ENCODE measurements at regions of chr4 and their contacts with region 1.

Region 1: DNA sequence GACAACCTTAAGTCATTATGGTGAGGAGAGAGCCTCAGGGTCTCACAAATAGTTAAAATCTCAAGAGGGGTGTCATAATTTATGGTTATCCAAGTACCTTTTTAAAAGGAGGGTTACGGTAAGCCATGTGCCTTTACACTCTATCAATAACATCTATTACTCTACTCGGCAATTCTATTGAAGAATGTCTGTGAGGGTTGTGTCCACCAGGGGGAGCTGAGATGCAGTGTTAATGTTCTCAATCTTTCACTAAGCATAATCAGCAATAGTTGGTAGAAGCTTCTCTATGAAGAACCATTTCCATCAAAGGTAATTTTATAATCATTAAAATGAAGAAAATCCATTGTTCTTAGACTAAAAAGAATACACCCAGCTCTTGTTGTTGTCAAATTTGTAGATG is 457.4 kb downstream of the CENPC start:
- DNase-seq: peak; percentile 74
- ATAC-seq: no peak
- H3K4me3 Mint-ChIP-seq: no peak overlapping the region
- H3K27ac Mint-ChIP-seq: no peak overlapping the region
- H3K4me1 Mint-ChIP-seq: no peaks in the 10 kb centered on the region
- H3K27me3 Mint-ChIP-seq: peaks cover 2% of the 10 kb centered on the region
- CTCF ChIP-seq: peak; percentile 69

Region 2: GRCh38 chr4:66704243-66704642 is 383.7 kb before region 1 on chr4:
- CTCF ChIA-PET with region 1: no interaction called
- POLR2A ChIA-PET with region 1: no interaction called
- intact Hi-C with region 1: no loop called
- DNase-seq: no peak
- ATAC-seq: no peak
- H3K4me3 Mint-ChIP-seq: no peak overlapping the region
- H3K27ac Mint-ChIP-seq: no peak overlapping the region
- H3K4me1 Mint-ChIP-seq: no peaks in the 10 kb centered on the region
- H3K27me3 Mint-ChIP-seq: no peaks in the 10 kb centered on the region
- CTCF ChIP-seq: no peak

Region 3: DNA sequence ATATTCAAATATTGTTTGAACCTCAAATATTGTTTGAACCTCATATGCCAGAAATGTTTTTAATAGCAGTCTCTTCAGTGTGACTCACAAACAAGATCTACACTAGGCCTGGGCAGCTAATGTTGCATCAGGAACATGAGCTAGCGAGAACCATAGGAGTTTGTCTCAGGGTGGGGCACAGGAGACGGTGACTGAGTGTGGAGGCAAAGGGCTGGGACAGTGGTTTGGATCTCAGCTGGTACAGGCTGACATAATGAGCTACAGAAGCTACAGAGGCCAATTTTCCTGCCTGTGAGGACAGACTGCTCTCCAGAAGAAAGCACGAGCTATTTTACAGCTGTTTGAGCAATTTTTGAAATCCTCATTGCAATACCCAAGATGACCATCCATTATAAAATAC is 232.7 kb after region 1 on chr4:
- CTCF ChIA-PET with region 1: interaction called, 12 read pairs
- POLR2A ChIA-PET with region 1: no interaction called
- intact Hi-C with region 1: no loop called
- DNase-seq: no peak
- ATAC-seq: no peak
- H3K4me3 Mint-ChIP-seq: no peak overlapping the region
- H3K27ac Mint-ChIP-seq: no peak overlapping the region
- H3K4me1 Mint-ChIP-seq: no peaks in the 10 kb centered on the region
- H3K27me3 Mint-ChIP-seq: peaks cover 1% of the 10 kb centered on the region
- CTCF ChIP-seq: no peak

Region 4: DNA sequence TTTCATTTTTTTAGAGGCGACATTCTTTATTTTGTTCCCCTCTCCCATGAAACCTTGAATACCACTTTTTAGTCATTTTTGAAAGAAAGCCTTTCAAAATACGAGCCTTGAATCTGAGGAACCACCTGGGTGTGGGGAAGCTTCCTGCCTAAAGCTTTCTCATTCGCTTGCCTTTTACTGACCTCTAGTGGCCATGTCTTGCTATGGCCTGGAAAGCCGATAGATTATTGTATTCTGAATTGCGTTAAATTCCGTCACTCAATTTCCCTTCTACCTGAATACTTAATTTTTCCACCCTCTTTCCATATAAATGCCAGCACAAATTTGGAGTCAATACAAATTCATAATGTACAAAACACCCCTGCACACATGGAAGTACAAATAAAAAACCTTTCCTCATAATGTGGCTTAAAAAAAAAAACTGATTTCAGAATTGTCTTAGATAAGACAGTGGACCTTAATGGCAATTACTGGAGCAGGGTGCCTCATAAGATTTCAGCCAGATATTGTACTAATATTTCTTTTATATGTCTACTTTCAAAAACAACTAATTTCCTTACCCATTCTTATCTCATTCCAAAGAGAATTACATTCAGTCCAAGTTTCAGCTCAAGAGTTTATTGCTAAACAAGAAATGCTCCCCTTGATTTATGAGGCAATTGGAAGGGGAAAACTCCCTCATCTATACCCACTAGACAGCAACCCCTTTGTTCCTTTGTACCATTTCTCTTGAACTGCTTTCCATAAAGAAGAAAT is 239.5 kb after region 1 on chr4:
- CTCF ChIA-PET with region 1: interaction called, 22 read pairs
- POLR2A ChIA-PET with region 1: no interaction called
- intact Hi-C with region 1: loop called (anchors 1 kb)
- DNase-seq: peak; percentile 64
- ATAC-seq: peak; percentile 64
- H3K4me3 Mint-ChIP-seq: no peak overlapping the region
- H3K27ac Mint-ChIP-seq: no peak overlapping the region
- H3K4me1 Mint-ChIP-seq: no peaks in the 10 kb centered on the region
- H3K27me3 Mint-ChIP-seq: peaks cover 11% of the 10 kb centered on the region
- CTCF ChIP-seq: peak; percentile 88